ENCODE measurements at regions of chr3 and their contacts with region 1.

Region 1: DNA sequence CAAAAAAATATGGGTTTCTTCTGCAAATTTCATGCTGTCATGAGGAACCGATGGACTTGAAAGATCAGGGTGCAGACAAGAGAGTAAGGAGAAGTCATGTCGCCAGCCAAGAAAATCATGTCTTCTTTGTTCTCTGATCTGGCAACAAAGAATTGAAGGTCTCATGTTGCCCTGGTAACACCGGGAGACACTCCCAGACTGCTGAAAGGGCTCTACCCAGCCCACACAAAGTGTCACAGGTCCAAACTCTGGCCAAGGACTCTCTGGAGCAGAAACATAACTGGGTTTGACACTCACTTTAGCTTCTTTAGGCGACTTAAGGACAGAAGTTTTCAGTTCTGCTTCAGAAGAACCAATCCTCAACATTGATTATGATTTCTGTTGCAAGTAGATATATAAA is 42.9 kb downstream of the SIDT1 start:
- DNase-seq: no peak
- H3K4me3 ChIP-seq: no peak overlapping the region
- H3K27ac ChIP-seq: no peak overlapping the region
- H3K4me1 ChIP-seq: no peaks in the 10 kb centered on the region
- H3K27me3 ChIP-seq: peaks cover 2% of the 10 kb centered on the region
- CTCF ChIP-seq: no peak

Region 2: DNA sequence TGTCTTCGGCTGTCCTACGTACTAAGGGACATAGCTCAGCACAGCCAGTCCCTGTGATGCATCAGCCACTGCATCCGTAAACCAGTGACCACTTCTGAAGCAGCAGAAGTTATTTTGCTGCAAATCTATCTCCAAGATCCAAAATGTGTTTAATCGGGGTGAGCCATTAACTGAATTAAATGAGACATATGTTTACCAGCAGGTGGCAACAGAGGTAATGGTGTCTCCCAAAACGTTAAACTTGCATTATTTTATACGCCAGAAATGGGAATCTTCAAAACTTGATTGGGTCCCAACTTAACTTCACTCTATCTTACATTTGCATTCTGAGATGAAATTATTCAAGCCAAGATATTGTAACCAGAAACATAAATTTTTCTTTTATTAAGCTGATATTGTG is 439.1 kb before region 1 on chr3:
- CTCF ChIA-PET with region 1: no interaction called
- dilution Hi-C with region 1: no loop called
- in situ Hi-C with region 1: no loop called
- intact Hi-C with region 1: loop called (anchors 10 kb)
- DNase-seq: peak; percentile 17
- H3K4me3 ChIP-seq: no peak overlapping the region
- H3K27ac ChIP-seq: no peak overlapping the region
- H3K4me1 ChIP-seq: peaks cover 8% of the 10 kb centered on the region
- H3K27me3 ChIP-seq: no peaks in the 10 kb centered on the region
- CTCF ChIP-seq: peak; percentile 47 to 61

Region 3: DNA sequence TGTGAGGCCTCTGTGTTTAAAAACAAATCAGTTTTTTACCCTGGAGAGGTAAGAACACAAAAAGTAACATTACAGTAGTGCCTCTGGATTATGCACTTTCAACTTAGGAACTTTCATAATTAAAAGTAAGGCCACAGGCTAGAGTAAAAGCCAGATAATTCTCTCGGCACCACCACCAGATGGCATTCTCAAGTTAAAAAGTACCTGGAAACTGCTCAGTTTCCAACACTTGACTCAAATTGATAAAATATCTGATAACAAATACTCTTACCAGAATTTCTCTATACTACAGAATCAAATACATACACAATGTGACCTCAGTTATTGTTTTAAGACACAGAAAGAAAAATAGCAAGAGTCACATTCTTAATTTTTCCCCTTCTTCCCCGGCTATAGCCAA is 80.2 kb before region 1 on chr3:
- CTCF ChIA-PET with region 1: interaction called, 19 read pairs
- dilution Hi-C with region 1: no loop called
- in situ Hi-C with region 1: loop called in 1 of 2 experiments (anchors 10 kb)
- intact Hi-C with region 1: loop called (anchors 1 kb)
- DNase-seq: peak; percentile 27
- H3K4me3 ChIP-seq: no peak overlapping the region
- H3K27ac ChIP-seq: no peak overlapping the region
- H3K4me1 ChIP-seq: no peaks in the 10 kb centered on the region
- H3K27me3 ChIP-seq: no peaks in the 10 kb centered on the region
- CTCF ChIP-seq: peak; percentile 37 to 56

Region 4: DNA sequence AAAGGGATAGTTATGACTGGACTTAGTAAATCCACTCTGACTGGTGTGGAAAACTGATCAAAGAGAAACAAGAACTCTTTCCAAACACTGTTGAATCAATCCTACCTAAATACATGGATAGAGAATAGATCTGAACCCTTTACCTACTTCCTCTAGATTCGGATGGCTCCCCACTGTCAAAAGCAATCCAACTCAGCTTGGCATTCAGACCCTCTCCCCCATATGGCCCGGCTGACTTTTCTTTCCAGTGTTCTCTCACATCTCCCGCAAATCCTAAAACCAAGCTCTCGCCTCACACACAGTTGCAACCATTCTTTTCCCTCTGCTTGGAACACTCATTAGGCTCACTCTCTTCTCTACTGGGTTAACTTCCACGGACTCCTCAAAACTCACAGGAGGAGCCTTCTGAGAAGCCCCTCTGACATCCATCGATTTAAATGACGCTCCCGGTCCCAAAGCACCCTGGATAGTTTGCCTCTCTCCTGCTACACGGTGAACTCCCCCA is 60.9 kb before region 1 on chr3:
- CTCF ChIA-PET with region 1: interaction called, 28 read pairs
- dilution Hi-C with region 1: no loop called
- in situ Hi-C with region 1: no loop called
- intact Hi-C with region 1: no loop called
- DNase-seq: no peak
- H3K4me3 ChIP-seq: peak overlapping the region; percentile 65 to 78 (median 71)
- H3K27ac ChIP-seq: peak overlapping the region; percentile 55
- H3K4me1 ChIP-seq: no peaks in the 10 kb centered on the region
- H3K27me3 ChIP-seq: no peaks in the 10 kb centered on the region
- CTCF ChIP-seq: no peak

Region 5: GRCh38 chr3:113552851-113553250 is 22.4 kb before region 1 on chr3:
- CTCF ChIA-PET with region 1: interaction called, 3 read pairs
- dilution Hi-C with region 1: no loop called
- in situ Hi-C with region 1: no loop called
- intact Hi-C with region 1: loop called (anchors 1 kb)
- DNase-seq: no peak
- H3K4me3 ChIP-seq: no peak overlapping the region
- H3K27ac ChIP-seq: no peak overlapping the region
- H3K4me1 ChIP-seq: peaks cover 14% of the 10 kb centered on the region
- H3K27me3 ChIP-seq: no peaks in the 10 kb centered on the region
- CTCF ChIP-seq: peak in 1 of 2 donors; percentile 24

Region 6: GRCh38 chr3:113606539-113607218 is 31.5 kb after region 1 on chr3:
- CTCF ChIA-PET with region 1: no interaction called
- dilution Hi-C with region 1: no loop called
- in situ Hi-C with region 1: no loop called
- intact Hi-C with region 1: no loop called
- DNase-seq: no peak
- H3K4me3 ChIP-seq: no peak overlapping the region
- H3K27ac ChIP-seq: no peak overlapping the region
- H3K4me1 ChIP-seq: no peaks in the 10 kb centered on the region
- H3K27me3 ChIP-seq: no peaks in the 10 kb centered on the region
- CTCF ChIP-seq: no peak

Region 7: GRCh38 chr3:113626503-113627371 is 51.5 kb after region 1 on chr3:
- CTCF ChIA-PET with region 1: interaction called, 3 read pairs
- dilution Hi-C with region 1: no loop called
- in situ Hi-C with region 1: no loop called
- intact Hi-C with region 1: loop called (anchors 1 kb)
- DNase-seq: peak; percentile 55
- H3K4me3 ChIP-seq: no peak overlapping the region
- H3K27ac ChIP-seq: no peak overlapping the region
- H3K4me1 ChIP-seq: no peaks in the 10 kb centered on the region
- H3K27me3 ChIP-seq: no peaks in the 10 kb centered on the region
- CTCF ChIP-seq: peak; percentile 94 to 99

Region 8: DNA sequence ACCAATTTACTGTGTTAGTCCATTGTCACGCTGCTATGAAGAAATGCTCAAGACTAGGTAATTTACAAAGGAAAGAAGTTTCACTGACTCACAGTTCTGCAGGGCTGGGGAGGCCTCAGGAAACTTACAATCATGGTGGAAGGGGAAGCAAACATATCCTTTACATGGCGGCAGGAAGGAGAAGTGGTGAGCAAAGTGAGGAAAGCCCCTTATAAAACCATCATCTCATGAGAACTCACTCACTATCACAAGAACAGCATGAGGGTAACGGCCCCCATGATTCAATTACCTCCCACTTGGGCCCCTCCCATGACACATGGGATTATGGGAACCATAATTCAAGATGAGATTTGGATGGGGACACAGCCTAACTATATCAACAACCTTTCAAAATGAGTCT is 101.1 kb after region 1 on chr3:
- CTCF ChIA-PET with region 1: no interaction called
- dilution Hi-C with region 1: no loop called
- in situ Hi-C with region 1: no loop called
- intact Hi-C with region 1: no loop called
- DNase-seq: no peak
- H3K4me3 ChIP-seq: no peak overlapping the region
- H3K27ac ChIP-seq: no peak overlapping the region
- H3K4me1 ChIP-seq: no peaks in the 10 kb centered on the region
- H3K27me3 ChIP-seq: no peaks in the 10 kb centered on the region
- CTCF ChIP-seq: no peak

Measured in mammary epithelial cell (primary cell).